BJ (cell line): ENCODE measurements at regions of chr3 and their contacts with region 1.

Region 1: DNA sequence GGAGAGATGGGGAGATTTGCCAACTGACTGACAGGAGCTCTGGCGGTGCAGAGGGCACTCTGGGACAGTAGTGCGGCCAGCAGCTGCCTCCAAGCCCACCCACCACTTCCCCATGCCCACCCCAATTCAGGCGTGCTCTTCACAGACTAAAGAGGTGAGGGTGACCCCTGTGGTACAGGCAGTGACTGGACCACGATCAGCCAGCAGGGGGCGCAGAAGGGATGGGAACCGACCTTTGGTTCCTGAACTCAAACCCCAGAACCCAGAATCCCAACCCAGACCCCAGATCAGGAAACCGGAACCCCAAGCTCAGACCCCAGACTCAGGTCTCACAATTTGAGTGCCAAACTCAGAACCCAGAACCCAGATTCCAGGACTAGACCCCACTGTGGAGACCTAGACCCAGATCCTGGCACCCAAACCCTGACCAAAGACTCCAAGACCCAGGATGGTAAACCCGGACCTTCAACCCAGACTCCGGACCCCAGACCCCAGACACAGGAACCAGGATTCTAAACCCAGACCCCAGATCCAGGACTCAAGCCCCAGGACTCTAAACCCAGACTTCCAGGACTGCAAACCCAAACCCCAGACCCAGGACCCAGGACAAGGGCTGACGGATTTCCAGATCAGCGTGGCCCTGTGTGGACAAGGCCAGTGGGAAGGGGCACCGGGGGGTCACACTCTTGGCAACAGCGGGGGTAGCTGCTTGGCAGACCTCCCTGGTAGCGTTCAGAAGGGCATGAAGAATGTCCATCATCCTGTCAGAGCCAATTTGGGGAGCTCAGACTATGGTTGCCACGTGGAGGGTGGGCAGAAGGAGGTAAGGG is 3.7 kb upstream of the MYL3 start:
- DNase-seq: no peak
- H3K4me3 ChIP-seq: no peak overlapping the region
- H3K27me3 ChIP-seq: peaks cover 4% of the 10 kb centered on the region
- CTCF ChIP-seq: peak; percentile 95

Region 2: GRCh38 chr3:46705022-46705530 is 161.9 kb before region 1 on chr3:
- CTCF ChIA-PET with region 1: interaction called, 20 read pairs
- POLR2A ChIA-PET with region 1: no interaction called
- DNase-seq: no peak
- H3K4me3 ChIP-seq: no peak overlapping the region
- H3K27me3 ChIP-seq: peaks cover 21% of the 10 kb centered on the region
- CTCF ChIP-seq: peak; percentile 91

Region 3: GRCh38 chr3:46848271-46849044 is 18.5 kb before region 1 on chr3:
- CTCF ChIA-PET with region 1: interaction called, 21 read pairs
- POLR2A ChIA-PET with region 1: no interaction called
- DNase-seq: peak; percentile 27
- H3K4me3 ChIP-seq: no peak overlapping the region
- H3K27me3 ChIP-seq: peaks cover 2% of the 10 kb centered on the region; the same call in 1 of the 2 replicates
- CTCF ChIP-seq: peak; percentile 61

Region 4: GRCh38 chr3:46882377-46883053 is 15.6 kb after region 1 on chr3:
- CTCF ChIA-PET with region 1: interaction called, 70 read pairs
- POLR2A ChIA-PET with region 1: no interaction called
- DNase-seq: no peak
- H3K4me3 ChIP-seq: peak overlapping the region; percentile 43
- H3K27me3 ChIP-seq: peaks cover 27% of the 10 kb centered on the region
- CTCF ChIP-seq: no peak

Region 5: DNA sequence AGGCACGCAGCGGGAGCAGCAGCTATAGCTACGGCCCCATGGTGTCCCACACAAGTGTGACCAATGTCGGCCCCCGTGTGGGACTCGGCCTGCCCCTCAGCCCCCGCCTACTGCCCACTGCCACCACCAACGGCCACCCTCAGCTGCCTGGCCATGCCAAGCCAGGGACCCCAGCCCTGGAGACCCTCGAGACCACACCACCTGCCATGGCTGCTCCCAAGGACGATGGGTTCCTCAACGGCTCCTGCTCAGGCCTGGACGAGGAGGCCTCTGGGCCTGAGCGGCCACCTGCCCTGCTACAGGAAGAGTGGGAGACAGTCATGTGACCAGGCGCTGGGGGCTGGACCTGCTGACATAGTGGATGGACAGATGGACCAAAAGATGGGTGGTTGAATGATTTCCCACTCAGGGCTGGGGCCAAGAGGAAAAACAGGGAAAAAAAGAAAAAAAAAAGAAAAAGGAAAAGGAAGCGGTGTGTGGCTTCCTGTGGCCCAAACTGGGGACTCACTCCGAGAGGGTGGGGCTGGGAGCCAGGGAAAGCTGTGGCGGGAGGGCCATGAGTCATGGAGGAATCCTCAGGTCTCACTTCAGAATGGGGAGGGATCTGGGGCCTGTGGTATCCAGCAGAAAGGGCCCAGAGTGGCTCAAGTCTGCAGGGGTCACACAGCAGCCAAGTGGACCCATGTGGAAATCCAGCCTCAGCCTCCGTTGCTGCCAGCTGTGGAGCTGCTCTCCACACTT is 36.6 kb after region 1 on chr3:
- CTCF ChIA-PET with region 1: interaction called, 50 read pairs
- POLR2A ChIA-PET with region 1: no interaction called
- DNase-seq: no peak
- H3K4me3 ChIP-seq: no peak overlapping the region
- H3K27me3 ChIP-seq: no peaks in the 10 kb centered on the region
- CTCF ChIP-seq: no peak

Region 6: GRCh38 chr3:46909535-46910442 is 42.9 kb after region 1 on chr3:
- CTCF ChIA-PET with region 1: interaction called, 50 read pairs
- POLR2A ChIA-PET with region 1: no interaction called
- DNase-seq: no peak
- H3K4me3 ChIP-seq: no peak overlapping the region
- H3K27me3 ChIP-seq: no peaks in the 10 kb centered on the region
- CTCF ChIP-seq: peak; percentile 94